ENCODE measurements at regions of chr2 and their contacts with region 1.

Region 1: GRCh38 chr2:195318440-195319111 is 338.4 kb upstream of the SLC39A10 start:
- DNase-seq: peak; percentile 68
- H3K4me3 ChIP-seq: no peak overlapping the region
- H3K27ac ChIP-seq: no peak overlapping the region
- H3K4me1 ChIP-seq: peaks cover 9% of the 10 kb centered on the region
- H3K27me3 ChIP-seq: no peaks in the 10 kb centered on the region
- CTCF ChIP-seq: peak; percentile 76

Region 2: DNA sequence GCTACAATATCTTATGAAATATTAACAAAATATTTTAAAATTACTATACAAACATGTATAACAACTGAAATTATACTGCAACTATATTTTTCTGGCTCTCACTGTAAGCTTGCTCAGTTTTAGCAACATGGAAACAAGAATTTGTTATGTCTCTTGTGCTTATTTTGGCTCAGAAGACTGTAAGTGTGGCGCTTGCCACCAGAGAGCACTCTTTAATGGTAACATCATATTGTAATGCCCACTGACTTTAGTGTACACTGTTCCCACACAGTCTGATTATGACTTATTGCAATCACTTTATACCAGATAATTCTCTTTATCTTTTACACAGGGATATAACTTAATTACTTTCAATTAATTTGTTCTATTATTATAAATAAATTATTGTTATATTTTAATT is 1623.2 kb before region 1 on chr2:
- CTCF ChIA-PET with region 1: no interaction called
- POLR2A ChIA-PET with region 1: no interaction called
- intact Hi-C with region 1: loop called (anchors 2 kb)
- DNase-seq: peak; percentile 60
- H3K4me3 ChIP-seq: no peak overlapping the region
- H3K27ac ChIP-seq: no peak overlapping the region
- H3K4me1 ChIP-seq: no peaks in the 10 kb centered on the region
- H3K27me3 ChIP-seq: no peaks in the 10 kb centered on the region
- CTCF ChIP-seq: peak; percentile 66

Region 3: GRCh38 chr2:194166818-194167217 is 1151.8 kb before region 1 on chr2:
- CTCF ChIA-PET with region 1: no interaction called
- POLR2A ChIA-PET with region 1: no interaction called
- intact Hi-C with region 1: loop called (anchors 5 kb)
- DNase-seq: peak; percentile 51
- H3K4me3 ChIP-seq: no peak overlapping the region
- H3K27ac ChIP-seq: no peak overlapping the region
- H3K4me1 ChIP-seq: no peaks in the 10 kb centered on the region
- H3K27me3 ChIP-seq: no peaks in the 10 kb centered on the region
- CTCF ChIP-seq: peak; percentile 62

Region 4: GRCh38 chr2:194698012-194698411 is 620.6 kb before region 1 on chr2:
- CTCF ChIA-PET with region 1: no interaction called
- POLR2A ChIA-PET with region 1: no interaction called
- intact Hi-C with region 1: no loop called
- DNase-seq: no peak
- H3K4me3 ChIP-seq: no peak overlapping the region
- H3K27ac ChIP-seq: no peak overlapping the region
- H3K4me1 ChIP-seq: no peaks in the 10 kb centered on the region
- H3K27me3 ChIP-seq: no peaks in the 10 kb centered on the region
- CTCF ChIP-seq: no peak

Region 5: GRCh38 chr2:194907569-194907968 is 411.0 kb before region 1 on chr2:
- CTCF ChIA-PET with region 1: no interaction called
- POLR2A ChIA-PET with region 1: no interaction called
- intact Hi-C with region 1: no loop called
- DNase-seq: no peak
- H3K4me3 ChIP-seq: no peak overlapping the region
- H3K27ac ChIP-seq: no peak overlapping the region
- H3K4me1 ChIP-seq: no peaks in the 10 kb centered on the region
- H3K27me3 ChIP-seq: no peaks in the 10 kb centered on the region
- CTCF ChIP-seq: no peak

Region 6: GRCh38 chr2:195238379-195238778 is 80.2 kb before region 1 on chr2:
- CTCF ChIA-PET with region 1: no interaction called
- POLR2A ChIA-PET with region 1: no interaction called
- intact Hi-C with region 1: loop called (anchors 5 kb)
- DNase-seq: no peak
- H3K4me3 ChIP-seq: no peak overlapping the region
- H3K27ac ChIP-seq: no peak overlapping the region
- H3K4me1 ChIP-seq: no peaks in the 10 kb centered on the region
- H3K27me3 ChIP-seq: no peaks in the 10 kb centered on the region
- CTCF ChIP-seq: no peak

Region 7: DNA sequence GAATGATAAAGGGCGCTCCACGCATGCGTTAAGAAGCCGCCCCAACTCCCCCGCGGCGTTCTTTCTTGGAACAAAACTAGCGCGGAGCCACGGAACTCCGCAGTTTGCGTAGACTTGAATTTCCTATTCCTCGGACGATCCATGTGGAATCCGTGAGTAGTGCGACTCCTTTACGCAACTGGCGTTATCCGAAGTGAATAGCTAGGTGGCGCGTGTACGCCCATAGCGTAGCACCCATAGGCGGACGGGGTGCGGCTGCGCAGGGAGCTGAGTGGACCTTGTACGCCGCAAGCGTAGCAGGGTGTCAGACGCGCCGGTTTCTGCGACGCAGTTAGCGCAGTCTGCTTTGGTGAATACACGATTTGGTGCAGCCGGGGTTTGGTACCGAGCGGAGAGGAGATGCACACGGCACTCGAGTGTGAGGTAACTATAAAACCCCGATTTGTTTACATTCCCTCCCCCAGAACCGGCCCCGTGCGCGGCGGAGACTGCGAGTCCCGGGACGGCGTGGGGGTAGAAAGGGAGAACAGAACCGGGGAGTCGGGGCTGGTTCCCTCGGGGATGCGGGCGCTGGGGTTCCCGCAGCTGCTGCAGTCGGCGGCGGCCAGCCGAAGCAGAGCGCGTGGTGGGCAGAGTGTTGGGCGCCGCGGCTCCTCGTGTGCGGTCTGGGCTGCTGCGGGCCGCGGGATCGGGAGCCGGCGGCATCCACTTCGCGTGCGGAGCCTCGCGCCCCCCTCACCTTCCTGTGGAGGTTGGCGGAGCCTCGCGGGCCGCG is 338.5 kb after region 1 on chr2 and contains the start of gene SLC39A10:
- CTCF ChIA-PET with region 1: interaction called, 4 read pairs
- POLR2A ChIA-PET with region 1: no interaction called
- intact Hi-C with region 1: loop called (anchors 2 kb)
- DNase-seq: peak; percentile 99
- H3K4me3 ChIP-seq: peak within 1 kb of the TSS; percentile 88
- H3K27ac ChIP-seq: peak within 1 kb of the TSS; percentile 93
- H3K4me1 ChIP-seq: peaks cover 14% of the 10 kb centered on the region
- H3K27me3 ChIP-seq: no peaks in the 10 kb centered on the region
- CTCF ChIP-seq: no peak
- total RNA-seq, gene SLC39A10: 42.3 and 58.2 TPM in 2 replicates

Region 8: GRCh38 chr2:195945061-195945460 is 626.5 kb after region 1 on chr2:
- CTCF ChIA-PET with region 1: no interaction called
- POLR2A ChIA-PET with region 1: no interaction called
- intact Hi-C with region 1: loop called (anchors 10 kb)
- DNase-seq: no peak
- H3K4me3 ChIP-seq: no peak overlapping the region
- H3K27ac ChIP-seq: no peak overlapping the region
- H3K4me1 ChIP-seq: no peaks in the 10 kb centered on the region
- H3K27me3 ChIP-seq: no peaks in the 10 kb centered on the region
- CTCF ChIP-seq: no peak